ENCODE measurements at regions of chr9 and their contacts with region 1.

Region 1: DNA sequence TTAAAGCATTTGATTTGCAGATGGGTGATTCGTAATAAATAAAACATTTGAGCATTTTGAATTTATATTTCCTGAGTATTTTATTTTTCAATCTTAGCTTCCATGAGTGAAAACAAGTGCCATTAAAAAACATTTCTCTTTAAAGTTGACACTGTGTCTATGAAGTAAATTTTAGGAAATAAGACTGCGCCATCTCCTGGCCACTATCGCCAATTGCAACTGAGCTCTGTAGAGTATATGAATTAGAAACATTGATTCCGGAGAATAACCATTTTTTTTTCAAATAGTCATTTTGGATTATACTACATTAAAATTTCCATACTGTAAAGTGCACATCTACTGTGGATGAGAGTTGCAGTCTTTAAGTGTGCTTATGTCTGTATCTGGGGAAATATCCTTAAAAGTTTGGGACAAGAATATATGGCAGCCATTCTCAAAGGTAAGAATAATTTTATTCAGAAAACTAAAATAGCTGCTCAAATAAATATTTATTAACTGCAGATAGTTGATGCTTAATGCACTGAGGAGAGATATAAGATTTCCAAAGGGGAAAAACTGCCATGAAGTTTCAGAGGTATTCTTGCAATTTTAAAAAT is 5.9 kb downstream of the DMRTA1 start:
- DNase-seq: no peak
- H3K27ac ChIP-seq: no peak overlapping the region
- CTCF ChIP-seq: peak; percentile 95

Region 2: GRCh38 chr9:22244141-22245011 is 208.1 kb before region 1 on chr9:
- CTCF ChIA-PET with region 1: interaction called, 13 read pairs
- POLR2A ChIA-PET with region 1: no interaction called
- DNase-seq: peak; percentile 47
- H3K27ac ChIP-seq: no peak overlapping the region
- CTCF ChIP-seq: peak; percentile 91

Region 3: GRCh38 chr9:22307013-22307711 is 145.4 kb before region 1 on chr9:
- CTCF ChIA-PET with region 1: interaction called, 23 read pairs
- POLR2A ChIA-PET with region 1: no interaction called
- DNase-seq: peak; percentile 53
- H3K27ac ChIP-seq: no peak overlapping the region
- CTCF ChIP-seq: peak; percentile 86

Region 4: DNA sequence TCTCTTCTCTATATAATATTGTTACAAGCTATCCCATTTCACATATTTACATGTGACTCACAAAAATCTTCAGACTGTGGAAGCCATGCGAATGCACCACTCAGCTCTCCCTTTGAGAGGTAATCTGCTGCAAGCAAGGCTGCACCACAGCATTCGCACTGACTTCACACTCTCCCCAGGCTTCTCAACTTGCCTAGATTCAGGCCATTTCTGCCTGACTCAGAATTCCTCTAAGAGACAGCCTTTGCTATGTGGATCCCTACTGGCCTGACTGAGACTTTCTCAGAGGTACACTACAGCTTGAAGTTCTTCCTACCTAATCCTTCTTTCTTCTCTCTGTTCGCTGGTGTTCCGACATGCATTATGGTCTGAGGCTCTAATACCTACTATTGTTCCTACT is 27.0 kb before region 1 on chr9:
- CTCF ChIA-PET with region 1: no interaction called
- POLR2A ChIA-PET with region 1: no interaction called
- DNase-seq: no peak
- H3K27ac ChIP-seq: no peak overlapping the region
- CTCF ChIP-seq: no peak

Measured in RWPE1 (cell line).